ENCODE measurements at regions of chr18 and their contacts with region 1.

Region 1: DNA sequence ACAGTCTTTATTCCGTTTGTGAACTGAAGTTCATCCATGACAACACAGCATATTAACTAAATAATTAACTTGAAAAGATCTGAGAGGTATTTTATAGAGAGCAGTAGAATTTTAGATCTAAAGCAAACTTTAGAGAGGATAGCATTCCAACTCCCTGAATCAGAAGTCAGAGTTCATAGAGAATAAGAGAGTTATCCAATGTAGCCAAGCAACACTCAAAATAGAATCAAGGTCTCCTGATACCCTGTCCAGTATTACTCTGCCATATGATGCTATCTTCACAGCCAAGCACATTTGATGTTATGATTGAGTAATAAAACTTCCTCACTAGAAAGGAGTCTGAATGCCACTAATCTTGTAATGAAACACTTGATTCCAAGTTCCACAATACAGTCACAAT is 55.5 kb downstream of the RIT2 start:
- DNase-seq: peak in 1 of 2 experiments; percentile 47
- H3K4me3 ChIP-seq: no peak overlapping the region
- H3K27ac ChIP-seq: no peak overlapping the region
- H3K4me1 ChIP-seq: no peaks in the 10 kb centered on the region
- H3K27me3 ChIP-seq: no peaks in the 10 kb centered on the region
- CTCF ChIP-seq: no peak

Region 2: GRCh38 chr18:44149706-44150105 is 1089.7 kb after region 1 on chr18:
- CTCF ChIA-PET with region 1: interaction called, 19 read pairs
- POLR2A ChIA-PET with region 1: no interaction called
- intact Hi-C with region 1: no loop called
- DNase-seq: peak; percentile 4 to 77
- H3K4me3 ChIP-seq: no peak overlapping the region
- H3K27ac ChIP-seq: peak overlapping the region; percentile 54
- H3K4me1 ChIP-seq: peaks cover 22% of the 10 kb centered on the region
- H3K27me3 ChIP-seq: no peaks in the 10 kb centered on the region
- CTCF ChIP-seq: no peak